Mammary epithelial cell (primary cell): ENCODE measurements at regions of chr6 and their contacts with region 1.

Region 1: DNA sequence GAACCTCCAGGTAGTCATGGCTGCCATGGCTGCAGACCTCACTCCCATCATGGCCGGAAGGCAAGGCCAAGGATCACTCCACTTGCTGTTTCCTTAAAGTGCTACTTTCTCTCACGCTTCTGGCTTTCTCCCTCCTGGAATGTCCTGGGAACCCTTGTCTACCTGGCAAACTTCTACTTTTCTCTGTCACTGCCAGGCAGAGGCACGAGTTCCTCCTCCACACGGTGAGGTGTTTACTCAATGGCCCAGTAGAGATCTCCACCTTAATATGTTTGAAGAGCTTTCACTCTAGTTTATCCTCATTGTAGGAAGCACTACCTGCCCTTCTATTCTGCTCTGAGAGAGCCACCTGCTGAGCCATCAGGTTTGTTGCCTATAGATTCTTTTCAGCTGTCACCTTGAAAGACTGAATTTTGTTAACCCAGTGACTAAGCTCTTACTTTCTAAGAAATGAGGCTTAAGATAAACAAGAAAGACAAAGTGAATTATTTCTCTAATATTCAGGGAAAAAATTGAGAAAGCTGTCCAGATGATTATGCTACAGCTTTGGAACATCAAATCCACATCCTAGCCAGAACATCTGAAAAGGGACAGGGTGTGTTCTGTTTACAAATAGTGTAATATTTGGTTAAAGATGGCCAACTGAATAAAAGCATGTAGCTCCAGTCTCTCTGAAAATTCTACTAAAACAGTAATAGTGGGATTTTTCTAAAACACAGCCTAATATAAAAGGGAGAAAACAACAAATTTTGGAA is 54.9 kb downstream of the PLAGL1 start:
- DNase-seq: no peak
- H3K4me3 ChIP-seq: no peak overlapping the region
- H3K27ac ChIP-seq: no peak overlapping the region
- H3K4me1 ChIP-seq: peaks cover 4% of the 10 kb centered on the region
- H3K27me3 ChIP-seq: no peaks in the 10 kb centered on the region
- CTCF ChIP-seq: no peak

Region 2: DNA sequence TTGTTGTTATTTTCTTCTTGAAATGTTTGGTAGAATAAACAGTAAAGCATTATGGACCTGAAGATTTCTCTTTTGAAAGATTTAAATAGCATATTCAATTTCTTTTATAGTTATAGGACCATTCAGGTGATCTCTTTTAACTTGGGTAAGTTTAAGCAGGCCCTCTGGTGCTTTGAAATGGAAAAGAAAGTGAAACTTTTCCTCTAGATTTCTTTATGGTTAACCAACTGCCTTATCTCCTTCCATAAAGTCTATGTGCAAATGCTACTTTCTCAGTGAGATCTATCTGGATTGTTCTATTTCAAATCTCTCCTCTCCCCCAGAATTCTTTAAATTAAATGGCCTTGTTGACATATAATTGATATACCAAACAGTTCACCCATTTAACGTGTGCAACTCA is 221.3 kb before region 1 on chr6:
- CTCF ChIA-PET with region 1: no interaction called
- dilution Hi-C with region 1: no loop called
- in situ Hi-C with region 1: no loop called
- intact Hi-C with region 1: no loop called
- DNase-seq: no peak
- H3K4me3 ChIP-seq: no peak overlapping the region
- H3K27ac ChIP-seq: no peak overlapping the region
- H3K4me1 ChIP-seq: no peaks in the 10 kb centered on the region
- H3K27me3 ChIP-seq: no peaks in the 10 kb centered on the region
- CTCF ChIP-seq: no peak

Region 3: DNA sequence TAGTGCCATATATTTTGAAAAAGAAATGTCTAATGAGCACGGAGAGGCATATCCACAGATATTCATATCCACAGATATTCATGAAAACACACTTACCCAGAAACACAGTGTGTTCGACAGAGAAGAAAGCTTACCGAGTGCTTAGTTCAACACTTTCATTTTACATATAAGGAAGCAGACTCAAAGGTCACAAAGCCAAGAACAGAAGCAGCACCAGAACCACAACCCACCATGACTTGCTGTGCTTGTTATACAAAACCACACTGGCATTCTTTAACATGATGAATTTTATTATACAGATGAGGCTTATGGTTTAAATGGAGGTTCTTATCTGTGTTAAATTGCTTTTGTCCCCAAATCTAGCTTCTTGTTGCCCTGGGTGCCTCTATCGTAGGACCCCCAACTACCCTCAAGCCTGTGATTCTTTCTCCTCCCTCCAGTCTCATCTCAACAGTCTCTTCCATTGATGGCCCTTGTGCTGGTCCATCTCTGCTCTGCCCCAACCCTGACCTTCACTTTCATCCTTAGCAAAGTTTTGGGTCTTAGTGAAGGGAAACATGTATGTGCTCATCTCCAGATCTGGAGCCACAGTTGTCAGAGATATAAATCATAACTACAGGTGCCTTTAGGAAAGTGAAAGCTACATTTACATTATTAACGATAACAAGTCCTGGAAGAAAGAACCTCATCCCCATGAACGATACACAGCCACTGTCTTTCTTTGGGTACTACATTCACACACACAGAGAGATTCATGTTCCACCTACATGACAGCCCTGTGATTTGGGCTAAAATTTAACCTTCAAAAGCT is 102.2 kb after region 1 on chr6:
- CTCF ChIA-PET with region 1: no interaction called
- dilution Hi-C with region 1: loop called (anchors 5 kb)
- in situ Hi-C with region 1: no loop called
- intact Hi-C with region 1: no loop called
- DNase-seq: no peak
- H3K4me3 ChIP-seq: no peak overlapping the region
- H3K27ac ChIP-seq: no peak overlapping the region
- H3K4me1 ChIP-seq: no peaks in the 10 kb centered on the region
- H3K27me3 ChIP-seq: no peaks in the 10 kb centered on the region
- CTCF ChIP-seq: no peak